HEK293T (cell line): ENCODE measurements at regions of chr17 and their contacts with region 1.

Region 1: GRCh38 chr17:82030470-82031302 is 792 bp upstream of the RAC3 start:
- DNase-seq: peak; percentile 88

Region 2: GRCh38 chr17:82051776-82052637 is 21.3 kb after region 1 on chr17 and contains the starts of genes GPS1 and RFNG:
- CTCF ChIA-PET with region 1: interaction called, 3 read pairs
- POLR2A ChIA-PET with region 1: interaction called, 15 read pairs
- DNase-seq: peak; percentile 85

Region 3: DNA sequence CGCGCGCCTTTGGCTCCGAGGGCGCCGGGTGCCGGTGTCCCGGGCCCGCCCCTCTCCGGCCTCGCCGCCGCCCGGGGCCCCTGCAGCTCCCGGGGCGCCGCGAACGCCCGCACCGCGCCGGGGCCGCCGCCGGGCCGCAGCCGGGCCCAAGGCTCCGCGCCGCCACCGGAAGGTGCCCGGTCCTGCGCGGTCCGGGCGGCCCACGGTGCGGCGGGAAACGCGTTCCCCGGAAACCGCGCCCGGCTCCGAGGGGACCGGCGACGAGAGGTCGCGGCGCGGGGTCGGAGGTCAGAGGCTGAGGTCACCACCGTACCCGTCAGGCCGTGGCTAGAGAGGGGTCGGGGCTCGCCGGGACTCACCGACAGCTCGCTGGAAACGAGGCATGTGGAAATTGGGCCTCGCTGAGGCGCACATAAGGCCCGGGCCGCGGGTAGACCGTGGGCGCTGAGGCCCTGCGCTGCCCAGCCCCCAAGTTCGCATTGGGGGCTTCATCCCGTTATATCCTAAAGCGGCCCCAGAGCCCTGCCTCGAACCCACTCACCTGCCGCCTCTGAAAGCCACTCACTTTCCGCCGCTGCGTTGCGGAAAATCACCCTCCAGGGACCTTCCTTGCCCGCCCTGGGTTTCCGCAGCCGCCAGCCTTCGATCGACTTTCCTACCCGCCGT is 35.1 kb after region 1 on chr17 and contains the start of gene DUS1L:
- CTCF ChIA-PET with region 1: interaction called, 5 read pairs
- POLR2A ChIA-PET with region 1: interaction called, 13 read pairs
- DNase-seq: peak; percentile 86

Region 4: DNA sequence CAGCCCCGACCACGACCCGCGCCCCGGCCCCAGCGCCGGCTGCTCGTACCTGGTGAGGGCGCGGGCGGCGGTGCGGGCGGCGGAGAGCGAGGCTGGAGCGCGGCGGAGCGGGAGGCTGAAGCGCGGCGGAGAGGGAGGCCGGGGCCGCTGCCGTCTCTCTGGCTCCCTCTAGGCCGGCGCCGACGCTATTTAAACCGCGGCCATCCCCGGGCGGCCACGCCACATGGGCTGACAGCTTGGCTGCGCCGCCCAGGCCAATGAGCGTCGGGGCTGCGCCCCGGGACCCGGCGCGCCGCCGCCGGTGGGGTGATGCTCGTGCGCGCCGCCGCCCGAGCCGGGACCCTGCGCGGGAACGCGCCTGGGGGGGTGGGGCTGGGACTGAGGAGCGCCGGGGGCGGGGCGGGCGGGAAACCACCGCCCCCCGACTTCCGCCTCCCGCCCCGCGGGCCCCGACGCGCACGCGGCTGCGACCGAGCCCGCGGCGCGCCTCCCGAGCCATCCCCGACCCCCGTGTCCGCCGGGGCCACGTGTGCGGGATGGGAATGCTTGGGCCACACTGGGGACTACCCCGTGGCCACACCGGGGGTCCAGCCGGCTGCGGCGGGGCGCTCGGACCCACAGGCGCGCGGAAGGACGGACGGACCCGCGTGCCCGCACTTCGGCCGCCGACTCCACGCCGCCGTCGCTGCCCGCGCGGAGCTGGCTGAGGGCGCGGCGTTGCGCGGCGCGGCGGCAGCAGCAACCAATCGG is 67.6 kb after region 1 on chr17 and contains the start of gene FASN:
- CTCF ChIA-PET with region 1: interaction called, 3 read pairs
- POLR2A ChIA-PET with region 1: interaction called, 34 read pairs
- DNase-seq: peak; percentile 99

Region 5: DNA sequence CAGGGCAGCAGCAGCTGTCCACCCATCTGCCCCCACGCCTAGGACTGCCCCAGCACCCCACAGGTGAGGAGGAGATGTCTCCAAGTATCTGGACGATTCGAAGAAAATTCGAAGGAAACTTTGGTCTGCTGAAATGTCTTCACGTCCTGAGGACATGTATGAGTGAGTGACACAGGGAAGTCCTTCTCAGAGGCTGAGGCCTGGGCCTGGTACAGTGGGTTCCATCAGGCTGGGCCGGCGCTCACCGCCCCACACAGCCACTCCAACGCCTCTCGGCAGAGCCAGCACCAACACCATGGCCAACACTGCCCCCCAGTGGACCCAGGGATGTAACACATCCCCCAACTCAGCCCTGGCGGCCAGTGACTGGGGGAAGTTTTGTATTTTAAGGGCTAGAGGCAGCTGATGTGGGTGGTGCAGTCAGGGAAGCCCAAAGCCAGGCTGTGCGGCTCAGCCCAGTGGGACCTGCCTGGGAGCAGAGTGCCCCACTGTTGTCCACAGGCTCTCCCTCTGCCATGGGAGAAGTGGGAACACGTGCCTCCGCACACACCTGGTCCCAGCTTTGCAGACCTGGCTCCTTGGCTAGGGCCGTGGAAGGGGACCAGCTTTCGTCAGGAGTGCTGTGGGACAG is 123.2 kb after region 1 on chr17:
- CTCF ChIA-PET with region 1: interaction called, 13 read pairs
- POLR2A ChIA-PET with region 1: interaction called, 8 read pairs
- DNase-seq: peak; percentile 93